Activated CD8-positive, alpha-beta T cell treated with anti-CD3 and anti-CD28 coated beads for 36 hours (primary cell): ENCODE measurements at regions of chr17 and their contacts with region 1.

Region 1: GRCh38 chr17:44210342-44211192 is 8.9 kb downstream of the UBTF start:
- DNase-seq: peak; percentile 95
- ATAC-seq: peak; percentile 89
- H3K4me3 Mint-ChIP-seq: peak overlapping the region; percentile 82
- H3K27ac Mint-ChIP-seq: peak overlapping the region; percentile 97
- H3K4me1 Mint-ChIP-seq: peaks cover 63% of the 10 kb centered on the region
- H3K27me3 Mint-ChIP-seq: no peaks in the 10 kb centered on the region
- CTCF ChIP-seq: peak; percentile 99

Region 2: DNA sequence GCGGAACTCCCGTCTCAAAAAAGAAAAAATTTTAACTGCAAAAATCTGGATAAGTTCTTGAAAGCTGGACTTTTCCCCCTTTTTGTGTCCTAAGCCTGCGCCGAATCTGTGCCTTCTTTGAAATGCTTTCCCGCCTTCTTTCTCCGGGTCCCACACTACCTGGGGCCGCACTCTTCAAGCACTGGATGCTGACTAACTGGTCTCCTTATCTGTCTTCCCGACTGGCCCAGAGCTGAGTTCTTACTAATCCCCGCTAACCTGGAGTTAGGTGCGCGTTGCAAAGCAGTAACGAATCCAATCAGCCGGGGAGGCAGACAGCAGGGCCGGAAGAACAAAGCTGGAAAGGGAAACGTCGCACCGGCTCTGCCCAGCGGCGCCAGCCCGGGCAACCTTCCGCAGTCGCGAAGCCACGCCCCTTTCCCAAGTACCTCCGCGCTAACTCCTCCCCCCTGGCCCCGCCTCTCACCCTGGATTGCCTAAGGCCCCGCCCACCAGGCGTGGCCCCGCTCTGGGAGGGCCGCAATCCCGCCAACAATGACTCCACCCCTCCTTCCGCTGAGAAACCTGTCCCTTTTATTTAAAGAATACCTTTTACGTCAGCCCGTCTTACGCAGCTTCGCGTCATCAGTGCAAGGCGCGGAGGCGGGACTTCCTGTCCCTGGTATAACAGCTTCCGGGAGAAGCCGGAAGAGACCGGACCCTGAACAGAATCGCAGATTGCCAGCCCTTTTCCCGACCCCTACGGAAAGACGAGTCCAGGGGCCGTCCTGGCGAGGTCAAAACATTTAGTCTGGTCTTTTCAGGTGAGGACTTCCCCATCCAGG is 24.0 kb before region 1 on chr17 and contains the start of gene TMUB2:
- CTCF ChIA-PET with region 1: interaction called, 25 read pairs
- POLR2A ChIA-PET with region 1: interaction called, 17 read pairs
- intact Hi-C with region 1: no loop called
- DNase-seq: peak; percentile 100
- ATAC-seq: peak; percentile 98
- H3K4me3 Mint-ChIP-seq: peak within 1 kb of the TSS; percentile 100
- H3K27ac Mint-ChIP-seq: peak within 1 kb of the TSS; percentile 99
- H3K4me1 Mint-ChIP-seq: peaks cover 33% of the 10 kb centered on the region
- H3K27me3 Mint-ChIP-seq: no peaks in the 10 kb centered on the region
- CTCF ChIP-seq: no peak
- total RNA-seq, gene TMUB2: 17.5 TPM

Region 3: GRCh38 chr17:44247440-44247841 is 36.9 kb after region 1 on chr17:
- CTCF ChIA-PET with region 1: interaction called, 10 read pairs
- POLR2A ChIA-PET with region 1: interaction called, 4 read pairs
- intact Hi-C with region 1: no loop called
- DNase-seq: no peak
- ATAC-seq: no peak
- H3K4me3 Mint-ChIP-seq: no peak overlapping the region
- H3K27ac Mint-ChIP-seq: peak overlapping the region; percentile 89
- H3K4me1 Mint-ChIP-seq: peaks cover 48% of the 10 kb centered on the region
- H3K27me3 Mint-ChIP-seq: no peaks in the 10 kb centered on the region
- CTCF ChIP-seq: no peak

Region 4: GRCh38 chr17:44324571-44325275 is 114.2 kb after region 1 on chr17 and contains the start of gene SLC25A39:
- CTCF ChIA-PET with region 1: interaction called, 63 read pairs
- POLR2A ChIA-PET with region 1: interaction called, 11 read pairs
- intact Hi-C with region 1: loop called (anchors 5 kb)
- DNase-seq: peak; percentile 94
- ATAC-seq: peak; percentile 79
- H3K4me3 Mint-ChIP-seq: peak within 1 kb of the TSS; percentile 87
- H3K27ac Mint-ChIP-seq: peak within 1 kb of the TSS; percentile 95
- H3K4me1 Mint-ChIP-seq: peaks cover 29% of the 10 kb centered on the region
- H3K27me3 Mint-ChIP-seq: no peaks in the 10 kb centered on the region
- CTCF ChIP-seq: no peak
- total RNA-seq, gene SLC25A39: 149 to 153 TPM

Region 5: DNA sequence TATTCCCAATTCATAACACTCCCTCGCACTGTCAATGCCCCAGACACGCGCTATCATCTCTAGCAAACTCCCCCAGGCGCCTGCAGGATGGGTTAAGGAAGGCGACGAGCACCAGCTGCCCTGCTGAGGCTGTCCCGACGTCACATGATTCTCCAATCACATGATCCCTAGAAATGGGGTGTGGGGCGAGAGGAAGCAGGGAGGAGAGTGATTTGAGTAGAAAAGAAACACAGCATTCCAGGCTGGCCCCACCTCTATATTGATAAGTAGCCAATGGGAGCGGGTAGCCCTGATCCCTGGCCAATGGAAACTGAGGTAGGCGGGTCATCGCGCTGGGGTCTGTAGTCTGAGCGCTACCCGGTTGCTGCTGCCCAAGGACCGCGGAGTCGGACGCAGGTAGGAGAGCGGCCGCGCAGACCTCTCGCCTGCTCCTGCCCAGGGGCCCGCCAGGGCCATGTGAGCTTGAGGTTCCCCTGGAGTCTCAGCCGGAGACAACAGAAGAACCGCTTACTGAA is 134.4 kb after region 1 on chr17 and contains the start of gene GRN:
- CTCF ChIA-PET with region 1: interaction called, 53 read pairs
- POLR2A ChIA-PET with region 1: interaction called, 5 read pairs
- intact Hi-C with region 1: no loop called
- DNase-seq: peak; percentile 95
- ATAC-seq: peak; percentile 99
- H3K4me3 Mint-ChIP-seq: peak within 1 kb of the TSS; percentile 93
- H3K27ac Mint-ChIP-seq: peak within 1 kb of the TSS; percentile 81
- H3K4me1 Mint-ChIP-seq: peaks cover 19% of the 10 kb centered on the region
- H3K27me3 Mint-ChIP-seq: no peaks in the 10 kb centered on the region
- CTCF ChIP-seq: no peak
- total RNA-seq, gene GRN: 34.8 to 35.5 TPM

Region 6: DNA sequence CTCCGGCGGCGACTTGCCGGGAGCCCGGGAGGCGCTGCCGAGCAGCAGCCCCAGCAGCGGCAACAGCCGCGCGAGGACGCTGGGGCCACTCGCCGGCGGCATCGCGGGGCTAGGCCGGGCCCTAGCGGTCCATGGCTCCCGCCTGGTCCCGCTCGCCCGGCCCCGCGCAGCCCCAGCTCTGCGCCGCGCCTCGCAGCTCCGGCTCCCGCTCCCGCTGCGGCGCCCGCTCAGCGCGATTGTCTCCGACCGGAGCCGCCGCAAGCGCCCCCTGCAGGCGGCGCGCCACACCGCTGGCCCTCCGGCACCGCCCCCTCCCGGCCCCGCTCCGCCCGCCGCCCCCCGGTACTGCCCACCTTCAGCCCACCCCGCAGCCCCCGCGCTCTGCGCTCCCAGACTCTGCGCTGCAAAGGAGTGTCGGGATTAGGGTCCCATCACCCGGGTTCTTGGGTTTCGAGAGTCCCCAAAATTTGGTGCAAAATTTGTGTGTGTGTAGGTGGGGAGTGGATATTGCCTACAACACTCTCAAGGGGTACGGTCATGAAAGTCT is 153.1 kb after region 1 on chr17 and contains the start of gene FAM171A2:
- CTCF ChIA-PET with region 1: interaction called, 12 read pairs
- POLR2A ChIA-PET with region 1: interaction called, 4 read pairs
- intact Hi-C with region 1: no loop called
- DNase-seq: peak; percentile 64
- ATAC-seq: peak; percentile 91
- H3K4me3 Mint-ChIP-seq: peak within 1 kb of the TSS; percentile 66
- H3K27ac Mint-ChIP-seq: no peak within 1 kb of the TSS
- H3K4me1 Mint-ChIP-seq: peaks cover 2% of the 10 kb centered on the region
- H3K27me3 Mint-ChIP-seq: peaks cover 12% of the 10 kb centered on the region
- CTCF ChIP-seq: peak; percentile 95
- total RNA-seq, gene FAM171A2: 0.43 to 0.78 TPM